ENCODE measurements at regions of chr7 and their contacts with region 1.

Region 1: GRCh38 chr7:76020031-76020714 is 25.8 kb upstream of the TMEM120A start:
- DNase-seq: peak; percentile 49
- H3K4me3 Mint-ChIP-seq: no peak overlapping the region
- H3K27ac Mint-ChIP-seq: peak overlapping the region; percentile 77
- H3K4me1 Mint-ChIP-seq: peaks cover 24% of the 10 kb centered on the region
- H3K27me3 Mint-ChIP-seq: no peaks in the 10 kb centered on the region

Region 2: DNA sequence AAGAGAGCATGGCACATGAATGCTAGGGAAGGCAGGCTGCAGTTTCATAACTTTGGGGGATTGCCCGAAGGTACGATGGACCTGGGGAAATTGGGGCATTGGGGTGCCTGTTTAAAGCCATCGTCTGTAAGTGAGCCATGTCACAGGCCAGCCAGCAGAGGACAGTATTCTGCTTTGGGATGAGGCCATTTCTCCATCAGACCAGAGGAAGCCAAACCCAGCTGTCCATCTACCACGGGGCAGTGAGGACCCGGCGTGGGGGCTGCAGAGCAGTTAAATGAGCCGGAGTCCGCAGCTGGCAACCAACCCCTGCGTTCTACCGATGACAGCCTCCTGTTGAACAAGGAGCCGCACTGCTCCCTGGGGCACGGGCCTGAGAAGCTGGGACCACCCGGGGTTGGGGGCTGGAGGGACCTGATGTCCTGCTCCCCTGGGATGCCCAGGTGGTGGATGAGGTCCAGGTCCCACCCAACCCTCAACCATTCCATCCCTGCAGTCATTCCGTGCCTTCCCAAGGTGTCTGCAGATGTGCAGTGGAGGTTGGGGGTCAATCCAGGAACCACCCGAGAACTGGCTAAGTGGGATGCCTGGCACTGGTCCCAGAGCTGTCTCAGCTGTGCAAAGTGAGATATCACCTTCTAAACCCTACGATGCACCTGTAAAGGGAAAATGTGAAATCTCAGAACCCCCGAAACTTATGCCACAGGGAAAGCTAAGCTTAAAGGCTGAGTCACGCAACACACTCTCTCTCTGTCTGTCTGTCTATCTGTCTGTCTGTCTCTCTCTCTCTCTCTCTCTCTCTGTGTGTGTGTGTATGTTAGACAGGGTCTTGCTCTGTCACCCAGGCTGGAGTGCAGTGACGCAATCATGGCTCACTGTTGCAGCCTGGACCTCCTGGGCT is 153.4 kb before region 1 on chr7:
- intact Hi-C with region 1: loop called (anchors 1 kb)
- DNase-seq: peak; percentile 33
- H3K4me3 Mint-ChIP-seq: no peak overlapping the region
- H3K27ac Mint-ChIP-seq: no peak overlapping the region
- H3K4me1 Mint-ChIP-seq: peaks cover 22% of the 10 kb centered on the region
- H3K27me3 Mint-ChIP-seq: peaks cover 3% of the 10 kb centered on the region

Region 3: DNA sequence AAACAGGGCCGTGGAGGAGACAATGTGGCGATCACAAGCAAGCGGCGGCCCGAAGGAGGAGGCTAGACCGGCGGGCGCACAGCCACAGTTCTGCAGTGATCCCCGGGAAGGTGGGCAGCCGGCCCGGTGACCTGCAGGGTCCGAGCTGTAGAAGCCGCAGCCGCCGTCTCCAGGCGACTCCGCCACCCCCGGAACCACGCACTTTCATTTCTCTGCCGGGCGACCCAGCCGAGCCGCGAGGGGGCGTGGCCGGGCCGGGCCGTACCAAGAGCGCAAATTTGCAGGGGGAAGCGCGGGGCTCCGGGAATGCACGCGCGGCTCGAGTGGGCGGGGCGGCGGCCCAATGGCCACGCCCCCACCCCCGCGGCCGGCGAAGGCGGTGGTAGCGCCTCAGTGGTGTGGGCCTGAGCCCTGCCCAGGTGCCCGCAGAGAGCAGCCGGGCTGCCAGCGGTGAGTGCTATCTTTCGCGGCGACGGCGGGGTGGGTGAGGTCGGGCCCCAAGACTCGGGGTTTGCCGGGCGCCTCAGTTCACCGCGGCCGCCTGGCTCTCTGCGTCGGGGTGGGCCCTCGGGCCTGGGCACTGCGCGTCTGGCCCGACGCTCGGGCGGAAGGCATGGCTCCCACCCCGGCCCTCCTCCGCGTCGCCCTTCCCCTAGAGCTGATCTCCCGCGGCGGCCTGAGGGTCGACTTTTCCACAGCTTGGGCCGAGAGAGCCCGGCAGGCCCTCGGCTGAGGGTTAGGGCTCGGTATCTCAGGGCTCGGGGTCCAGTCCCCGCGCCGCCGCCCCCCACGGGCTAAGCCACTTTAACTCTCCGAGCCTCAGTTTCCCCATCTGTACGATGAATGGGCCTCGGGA is 105.2 kb before region 1 on chr7 and contains the start of gene POR:
- intact Hi-C with region 1: loop called (anchors 1 kb)
- DNase-seq: peak; percentile 97
- H3K4me3 Mint-ChIP-seq: peak within 1 kb of the TSS; percentile 87
- H3K27ac Mint-ChIP-seq: peak within 1 kb of the TSS; percentile 80
- H3K4me1 Mint-ChIP-seq: peaks cover 15% of the 10 kb centered on the region
- H3K27me3 Mint-ChIP-seq: no peaks in the 10 kb centered on the region
- total RNA-seq, gene POR: 105 and 106 TPM in 2 replicates

Region 4: GRCh38 chr7:75984130-75985008 is 35.8 kb before region 1 on chr7:
- intact Hi-C with region 1: no loop called
- DNase-seq: no peak
- H3K4me3 Mint-ChIP-seq: no peak overlapping the region
- H3K27ac Mint-ChIP-seq: no peak overlapping the region
- H3K4me1 Mint-ChIP-seq: no peaks in the 10 kb centered on the region
- H3K27me3 Mint-ChIP-seq: no peaks in the 10 kb centered on the region

Region 5: DNA sequence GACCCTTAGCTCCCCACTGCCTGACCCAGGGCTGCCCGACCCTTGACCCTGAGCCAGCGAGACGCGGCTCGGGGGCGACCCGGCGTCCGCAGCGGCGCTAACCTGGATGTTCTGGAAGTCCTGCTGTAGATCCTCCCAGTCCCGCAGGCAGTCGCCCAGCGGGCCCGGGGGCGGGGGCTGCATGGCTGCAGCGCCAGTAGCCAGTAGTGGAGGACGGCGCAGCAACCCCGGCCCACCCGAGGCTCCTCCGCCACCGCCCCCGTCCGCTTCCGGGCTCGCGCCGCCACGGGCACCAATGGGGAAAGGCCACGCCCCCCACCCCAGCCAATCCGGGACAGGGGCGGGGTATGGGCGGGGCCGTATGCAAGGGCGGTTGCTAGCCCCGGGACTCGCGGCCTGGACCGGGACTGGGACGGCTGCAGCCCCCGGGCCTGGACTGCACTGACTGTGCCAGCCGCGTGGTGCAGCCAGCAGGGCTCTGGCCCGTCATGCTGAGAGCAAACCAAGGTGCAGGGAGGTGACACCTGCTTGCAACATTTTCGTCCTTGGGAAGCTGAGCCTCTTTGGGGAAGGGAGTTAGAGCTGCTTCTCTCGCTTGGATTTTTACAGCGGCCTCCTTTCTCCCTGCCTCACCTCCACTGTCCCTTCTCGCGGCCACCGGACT is 25.7 kb before region 1 on chr7 and contains the start of gene TMEM120A:
- intact Hi-C with region 1: loop called (anchors 1 kb)
- DNase-seq: peak; percentile 91
- H3K4me3 Mint-ChIP-seq: peak within 1 kb of the TSS; percentile 80
- H3K27ac Mint-ChIP-seq: no peak within 1 kb of the TSS
- H3K4me1 Mint-ChIP-seq: peaks cover 29% of the 10 kb centered on the region
- H3K27me3 Mint-ChIP-seq: no peaks in the 10 kb centered on the region
- total RNA-seq, gene TMEM120A: 62.4 and 63.7 TPM in 2 replicates